ENCODE measurements at regions of chr14 and their contacts with region 1.

Region 1: GRCh38 chr14:37116933-37117849 is 55.2 kb downstream of the SLC25A21 start:
- DNase-seq: no peak
- H3K4me3 ChIP-seq: no peak overlapping the region
- H3K27ac ChIP-seq: peak overlapping the region in 1 of 2 donors; percentile 7
- H3K4me1 ChIP-seq: peaks cover 0 to 6% of the 10 kb centered on the region in 2 donors
- H3K27me3 ChIP-seq: no peaks in the 10 kb centered on the region
- CTCF ChIP-seq: peak; percentile 14 to 65 (median 44)

Region 2: GRCh38 chr14:36973806-36974442 is 143.3 kb before region 1 on chr14:
- intact Hi-C with region 1: loop called (anchors 5 kb)
- DNase-seq: no peak
- H3K4me3 ChIP-seq: no peak overlapping the region
- H3K27ac ChIP-seq: peak overlapping the region; percentile 68
- H3K4me1 ChIP-seq: peaks cover 0 to 10% of the 10 kb centered on the region in 2 donors
- H3K27me3 ChIP-seq: no peaks in the 10 kb centered on the region
- CTCF ChIP-seq: no peak

Region 3: DNA sequence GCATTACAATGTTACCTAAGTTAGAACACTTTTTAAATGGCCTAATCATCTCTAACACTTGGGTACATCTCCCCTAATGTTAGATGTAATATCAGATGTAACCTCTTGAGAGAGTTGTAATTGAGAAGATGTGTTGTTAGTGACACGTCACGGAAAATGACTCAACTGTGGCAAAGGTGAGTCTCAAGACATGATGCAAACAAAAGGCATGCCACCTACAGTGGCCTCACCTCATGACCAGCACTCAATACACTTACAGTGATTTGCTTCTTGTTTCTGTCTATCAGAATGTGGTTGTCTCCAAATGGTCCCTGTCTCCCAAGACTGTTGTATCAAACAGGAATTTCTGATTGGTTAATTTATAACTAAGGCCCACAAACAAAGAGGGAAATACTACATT is 36.0 kb before region 1 on chr14:
- intact Hi-C with region 1: no loop called
- DNase-seq: no peak
- H3K4me3 ChIP-seq: no peak overlapping the region
- H3K27ac ChIP-seq: no peak overlapping the region
- H3K4me1 ChIP-seq: no peaks in the 10 kb centered on the region
- H3K27me3 ChIP-seq: no peaks in the 10 kb centered on the region
- CTCF ChIP-seq: no peak